ENCODE measurements at regions of chr5 and their contacts with region 1.

Region 1: GRCh38 chr5:119411935-119412602 is 40.2 kb upstream of the HSD17B4 start:
- DNase-seq: peak; percentile 79
- H3K4me3 ChIP-seq: peak overlapping the region; percentile 92
- H3K27ac ChIP-seq: peak overlapping the region; percentile 89
- H3K4me1 ChIP-seq: peaks cover 9% of the 10 kb centered on the region
- H3K27me3 ChIP-seq: no peaks in the 10 kb centered on the region

Region 2: DNA sequence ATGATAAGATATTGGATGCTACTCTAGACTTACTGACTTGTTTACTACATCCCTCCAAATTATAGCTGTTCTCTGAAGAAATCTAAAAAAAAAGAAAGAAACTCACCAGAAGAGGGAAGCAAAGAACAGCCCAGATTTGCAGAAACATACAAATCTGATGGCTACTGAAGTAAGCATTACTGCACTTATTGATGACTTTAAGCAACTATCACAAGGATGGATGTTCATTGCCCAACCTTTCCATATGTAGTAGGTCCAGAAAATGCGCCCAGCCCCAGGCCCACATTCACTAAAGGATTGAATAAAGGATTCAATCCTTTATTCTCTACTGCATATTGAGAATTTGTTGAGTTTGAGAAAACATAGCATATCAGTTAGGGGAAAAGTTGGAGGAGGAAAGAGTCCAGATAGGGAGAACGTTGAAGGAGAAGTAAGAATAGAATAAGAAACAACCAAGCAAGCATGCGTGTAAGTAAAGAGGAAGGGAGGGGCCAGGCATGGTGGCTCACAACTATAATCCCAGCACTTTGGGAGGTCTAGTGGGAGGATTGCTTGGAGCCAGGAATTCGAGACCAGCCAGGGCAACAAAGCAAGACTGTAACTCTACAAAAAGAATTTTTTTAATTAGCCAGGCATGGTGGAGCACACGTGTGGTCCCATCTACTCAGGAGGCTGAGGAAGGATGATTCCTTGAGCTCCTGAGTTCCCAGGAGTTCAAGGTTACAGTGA is 389.9 kb before region 1 on chr5:
- in situ Hi-C with region 1: loop called (anchors 10 kb)
- DNase-seq: peak; percentile 58
- H3K4me3 ChIP-seq: no peak overlapping the region
- H3K27ac ChIP-seq: no peak overlapping the region
- H3K4me1 ChIP-seq: peaks cover 6% of the 10 kb centered on the region; the same call in 1 of the 2 replicates
- H3K27me3 ChIP-seq: no peaks in the 10 kb centered on the region

Region 3: DNA sequence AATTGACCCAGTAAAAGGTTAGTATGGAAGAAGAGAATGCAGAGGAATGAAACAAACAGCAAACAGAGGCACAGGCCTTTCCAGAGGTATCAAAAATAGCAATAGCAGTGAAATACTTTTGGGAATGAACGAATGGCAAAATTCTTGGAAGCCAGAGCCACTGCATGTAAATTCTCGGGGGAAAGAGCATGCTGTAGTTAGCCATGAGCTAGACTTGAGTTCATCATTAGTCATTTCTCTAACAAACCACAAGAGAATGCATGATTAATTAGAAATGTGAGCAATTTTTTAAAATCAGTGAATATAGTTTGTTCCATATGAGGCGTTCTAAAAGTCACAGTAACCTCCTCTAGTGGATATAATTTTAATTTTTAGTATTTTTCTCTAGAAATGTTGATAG is 881.7 kb after region 1 on chr5:
- in situ Hi-C with region 1: no loop called
- DNase-seq: peak; percentile 93
- H3K4me3 ChIP-seq: 0 out of 2 replicates have a peak overlapping the region, but pooled peaks have one; percentile 18
- H3K27ac ChIP-seq: peak overlapping the region; percentile 71
- H3K4me1 ChIP-seq: peaks cover 47% of the 10 kb centered on the region
- H3K27me3 ChIP-seq: no peaks in the 10 kb centered on the region

Measured in GM23248 (cell line).